MCF 10A (cell line): ENCODE measurements at regions of chr9 and their contacts with region 1.

Region 1: GRCh38 chr9:130997925-130998596 is 10.9 kb upstream of the LAMC3 start:
- DNase-seq: peak; percentile 73
- H3K4me3 Mint-ChIP-seq: no peak overlapping the region
- H3K27ac Mint-ChIP-seq: no peak overlapping the region
- H3K4me1 Mint-ChIP-seq: peaks cover 18% of the 10 kb centered on the region
- H3K27me3 Mint-ChIP-seq: peaks cover 17% of the 10 kb centered on the region
- CTCF ChIP-seq: peak; percentile 89

Region 2: DNA sequence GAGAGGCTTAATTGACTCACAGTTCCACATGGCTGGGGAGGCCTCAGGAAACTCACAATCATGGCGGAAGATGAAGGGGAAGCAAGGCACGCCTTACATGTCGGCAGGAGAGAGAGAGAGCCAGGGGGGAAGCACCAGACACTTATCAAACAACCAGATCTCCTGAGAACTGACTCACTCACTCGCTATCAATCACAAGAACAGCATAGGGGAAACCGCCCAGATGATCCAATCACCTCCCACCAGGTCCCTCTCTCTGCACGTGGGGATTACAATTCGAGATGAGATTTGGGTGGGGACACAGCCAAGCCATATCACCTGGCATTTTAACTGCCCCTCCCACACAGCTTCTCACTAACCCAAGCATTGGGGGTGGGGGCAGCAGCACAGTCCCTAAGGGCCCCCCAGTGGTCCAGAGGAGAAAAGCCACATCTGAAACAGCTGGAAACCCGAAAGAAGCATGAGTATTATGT is 629.4 kb before region 1 on chr9:
- CTCF ChIA-PET with region 1: no interaction called
- POLR2A ChIA-PET with region 1: no interaction called
- intact Hi-C with region 1: no loop called
- DNase-seq: no peak
- H3K4me3 Mint-ChIP-seq: no peak overlapping the region
- H3K27ac Mint-ChIP-seq: no peak overlapping the region
- H3K4me1 Mint-ChIP-seq: peaks cover 9% of the 10 kb centered on the region
- H3K27me3 Mint-ChIP-seq: peaks cover 5% of the 10 kb centered on the region
- CTCF ChIP-seq: peak; percentile 7

Region 3: GRCh38 chr9:130707225-130707976 is 290.7 kb before region 1 on chr9:
- CTCF ChIA-PET with region 1: interaction called, 6 read pairs
- POLR2A ChIA-PET with region 1: no interaction called
- intact Hi-C with region 1: loop called (anchors 5 kb)
- DNase-seq: peak; percentile 80
- H3K4me3 Mint-ChIP-seq: no peak overlapping the region
- H3K27ac Mint-ChIP-seq: no peak overlapping the region
- H3K4me1 Mint-ChIP-seq: no peaks in the 10 kb centered on the region
- H3K27me3 Mint-ChIP-seq: no peaks in the 10 kb centered on the region
- CTCF ChIP-seq: peak; percentile 79

Region 4: DNA sequence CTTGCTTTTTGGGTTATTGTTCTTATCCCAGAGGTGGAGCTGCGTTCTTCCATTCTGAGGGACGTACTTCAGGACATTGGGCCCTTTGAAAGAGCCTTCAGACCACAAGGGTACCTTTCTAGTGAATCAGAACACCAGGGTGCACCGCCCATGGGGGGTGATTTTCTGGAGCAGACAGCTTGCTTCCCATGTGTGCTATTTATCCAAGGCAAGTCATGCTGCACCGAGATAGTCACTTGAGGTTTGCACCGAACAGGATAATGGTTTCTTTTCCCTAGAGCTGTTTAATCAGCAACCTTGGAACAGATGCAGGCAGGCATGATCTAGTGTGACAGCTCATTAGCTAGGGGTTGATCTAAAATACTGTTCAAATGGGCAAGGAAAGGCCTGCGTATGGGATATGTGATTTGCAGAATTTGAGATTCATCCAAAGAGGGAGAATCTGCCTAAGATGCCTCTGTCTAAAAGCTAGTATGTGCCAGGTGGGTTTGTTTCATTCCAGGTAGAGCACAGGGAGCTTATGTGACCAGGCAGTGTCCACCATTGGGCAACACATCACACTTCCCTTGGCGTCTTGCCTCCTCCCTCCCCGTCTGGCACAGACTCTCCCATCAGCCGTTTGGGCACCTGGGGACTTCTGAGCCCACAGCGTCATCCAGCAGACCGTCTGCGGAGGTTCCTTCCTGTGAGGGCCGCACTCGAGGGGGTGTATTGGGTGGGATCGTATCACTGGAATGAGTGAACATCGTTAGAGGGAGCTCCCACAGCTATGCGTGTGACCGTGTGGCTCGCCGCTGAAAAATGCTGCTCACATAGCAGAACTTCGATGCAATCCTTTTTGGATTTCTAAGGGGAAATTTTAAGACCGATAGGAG is 140.0 kb before region 1 on chr9:
- CTCF ChIA-PET with region 1: no interaction called
- POLR2A ChIA-PET with region 1: no interaction called
- intact Hi-C with region 1: no loop called
- DNase-seq: peak; percentile 37
- H3K4me3 Mint-ChIP-seq: no peak overlapping the region
- H3K27ac Mint-ChIP-seq: no peak overlapping the region
- H3K4me1 Mint-ChIP-seq: no peaks in the 10 kb centered on the region
- H3K27me3 Mint-ChIP-seq: no peaks in the 10 kb centered on the region
- CTCF ChIP-seq: no peak

Region 5: GRCh38 chr9:130940693-130941576 is 57.1 kb before region 1 on chr9:
- CTCF ChIA-PET with region 1: no interaction called
- POLR2A ChIA-PET with region 1: no interaction called
- intact Hi-C with region 1: loop called (anchors 2 kb)
- DNase-seq: peak; percentile 87
- H3K4me3 Mint-ChIP-seq: no peak overlapping the region
- H3K27ac Mint-ChIP-seq: no peak overlapping the region
- H3K4me1 Mint-ChIP-seq: peaks cover 24% of the 10 kb centered on the region
- H3K27me3 Mint-ChIP-seq: peaks cover 11% of the 10 kb centered on the region
- CTCF ChIP-seq: peak; percentile 81

Region 6: GRCh38 chr9:130952065-130952762 is 45.8 kb before region 1 on chr9:
- CTCF ChIA-PET with region 1: interaction called, 12 read pairs
- POLR2A ChIA-PET with region 1: no interaction called
- intact Hi-C with region 1: no loop called
- DNase-seq: no peak
- H3K4me3 Mint-ChIP-seq: no peak overlapping the region
- H3K27ac Mint-ChIP-seq: no peak overlapping the region
- H3K4me1 Mint-ChIP-seq: peaks cover 22% of the 10 kb centered on the region
- H3K27me3 Mint-ChIP-seq: no peaks in the 10 kb centered on the region
- CTCF ChIP-seq: no peak